ENCODE measurements at regions of chr11 and their contacts with region 1.

Region 1: DNA sequence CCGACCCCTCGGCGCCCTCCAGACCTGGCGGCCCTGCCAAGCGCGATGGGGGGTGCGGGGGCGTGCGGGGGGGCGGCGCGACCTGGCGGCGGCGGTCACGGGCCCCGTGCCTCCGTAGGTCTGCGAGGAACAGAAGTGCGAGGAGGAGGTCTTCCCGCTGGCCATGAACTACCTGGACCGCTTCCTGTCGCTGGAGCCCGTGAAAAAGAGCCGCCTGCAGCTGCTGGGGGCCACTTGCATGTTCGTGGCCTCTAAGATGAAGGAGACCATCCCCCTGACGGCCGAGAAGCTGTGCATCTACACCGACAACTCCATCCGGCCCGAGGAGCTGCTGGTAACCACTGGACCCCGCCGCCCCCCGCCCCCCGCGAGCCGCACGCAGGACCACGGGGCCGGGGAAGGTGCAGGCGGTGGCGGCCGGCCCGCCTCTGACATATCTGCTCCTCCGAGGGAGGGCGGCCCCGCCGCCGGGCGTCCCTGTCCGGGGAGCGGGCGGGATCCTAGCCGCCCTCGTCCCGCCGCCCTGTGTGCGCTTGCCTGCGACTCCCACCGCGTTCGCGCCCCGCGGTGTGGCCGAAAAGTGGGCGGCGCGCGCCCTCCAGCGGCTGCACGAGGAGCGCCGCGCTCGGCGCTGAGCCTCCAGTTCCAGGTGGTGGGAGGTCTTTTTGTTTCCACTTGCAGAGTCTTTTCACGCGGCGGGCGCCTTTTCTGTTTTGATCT is 2.1 kb downstream of the CCND1 start:
- DNase-seq: peak; percentile 62
- H3K4me3 Mint-ChIP-seq: peak overlapping the region; percentile 73
- H3K27ac Mint-ChIP-seq: no peak overlapping the region
- H3K4me1 Mint-ChIP-seq: no peaks in the 10 kb centered on the region
- H3K27me3 Mint-ChIP-seq: peaks cover 24% of the 10 kb centered on the region

Region 2: DNA sequence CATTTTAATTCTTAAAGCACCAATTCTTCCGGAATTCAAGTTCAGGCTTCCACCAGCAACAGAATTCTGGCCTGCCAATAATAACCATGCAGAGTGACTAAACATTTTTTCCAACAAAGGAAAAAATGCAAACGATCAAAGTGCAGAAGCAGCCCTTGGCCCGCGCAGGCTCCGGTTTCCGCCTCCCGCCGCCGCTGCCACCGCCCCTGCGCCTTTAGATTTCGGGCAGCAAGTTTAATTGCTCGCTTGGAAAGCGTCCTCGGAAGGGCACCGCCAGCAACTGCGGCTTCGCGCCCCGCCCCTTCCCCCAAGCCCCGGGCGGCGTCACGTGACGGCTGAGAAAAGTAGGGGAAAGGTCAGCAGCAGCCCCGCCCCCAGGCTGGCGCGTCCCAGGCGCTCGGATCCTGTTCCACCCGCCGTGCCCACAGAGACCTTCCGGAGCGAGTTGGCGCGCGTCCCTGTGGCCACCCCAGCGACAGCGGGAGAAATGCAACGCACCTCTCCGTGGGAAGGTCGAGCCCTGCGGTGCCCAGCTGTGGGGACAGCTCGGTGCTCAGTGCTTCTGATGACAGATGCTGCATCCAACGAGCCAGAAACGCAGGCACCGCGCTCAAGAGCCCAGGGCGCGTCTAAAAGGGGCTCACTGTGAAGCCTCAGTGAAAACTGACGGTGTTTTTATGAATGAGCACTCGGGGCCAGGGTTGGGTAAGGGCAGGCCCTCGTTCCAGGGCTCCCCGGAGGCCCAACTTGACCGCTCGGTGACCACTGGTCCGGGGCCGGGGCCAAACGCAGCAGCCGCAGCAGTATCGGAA is 803.8 kb before region 1 on chr11:
- intact Hi-C with region 1: loop called (anchors 2 kb)
- DNase-seq: peak; percentile 85
- H3K4me3 Mint-ChIP-seq: peak overlapping the region; percentile 70
- H3K27ac Mint-ChIP-seq: peak overlapping the region; percentile 73
- H3K4me1 Mint-ChIP-seq: peaks cover 50% of the 10 kb centered on the region
- H3K27me3 Mint-ChIP-seq: peaks cover 2% of the 10 kb centered on the region

Region 3: DNA sequence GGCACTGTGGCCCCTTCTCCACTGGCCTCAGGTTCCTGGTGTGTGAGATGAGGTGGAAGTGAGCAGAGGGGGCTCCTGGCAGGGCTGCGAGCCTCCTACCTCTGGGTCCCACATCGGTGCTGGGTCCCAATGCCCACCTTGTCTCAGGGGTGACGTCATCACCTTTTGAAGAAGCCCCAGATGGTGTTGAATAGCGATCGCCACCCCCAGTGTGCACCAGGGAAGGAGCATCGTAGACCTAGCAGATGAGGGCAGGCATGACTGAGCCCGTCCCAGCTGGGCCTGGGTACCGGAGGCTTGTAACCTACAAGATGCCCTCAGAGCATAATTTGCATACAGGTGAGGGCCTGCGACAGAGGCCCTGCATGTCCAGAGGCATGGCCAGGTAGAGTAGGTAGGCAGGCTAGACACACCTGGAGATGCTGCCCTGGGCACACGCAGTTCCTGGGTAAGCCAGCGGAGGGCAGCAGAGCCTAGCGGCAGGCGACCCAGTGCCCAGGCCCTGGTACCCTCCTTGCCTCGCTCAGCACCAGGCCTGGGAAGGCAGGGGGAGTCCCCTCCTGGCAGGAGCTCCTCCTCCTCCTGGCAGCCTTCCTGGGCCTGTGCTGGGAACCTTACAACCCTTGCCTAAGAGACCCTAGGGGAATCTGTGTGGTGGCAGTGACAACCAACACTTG is 541.8 kb before region 1 on chr11:
- intact Hi-C with region 1: loop called (anchors 1 kb)
- DNase-seq: peak; percentile 53
- H3K4me3 Mint-ChIP-seq: no peak overlapping the region
- H3K27ac Mint-ChIP-seq: no peak overlapping the region
- H3K4me1 Mint-ChIP-seq: no peaks in the 10 kb centered on the region
- H3K27me3 Mint-ChIP-seq: no peaks in the 10 kb centered on the region

Region 4: GRCh38 chr11:69122642-69123431 is 520.2 kb before region 1 on chr11:
- intact Hi-C with region 1: loop called (anchors 5 kb)
- DNase-seq: peak; percentile 40
- H3K4me3 Mint-ChIP-seq: peak overlapping the region; percentile 59
- H3K27ac Mint-ChIP-seq: peak overlapping the region; percentile 5
- H3K4me1 Mint-ChIP-seq: peaks cover 36% of the 10 kb centered on the region
- H3K27me3 Mint-ChIP-seq: peaks cover 2% of the 10 kb centered on the region

Region 5: DNA sequence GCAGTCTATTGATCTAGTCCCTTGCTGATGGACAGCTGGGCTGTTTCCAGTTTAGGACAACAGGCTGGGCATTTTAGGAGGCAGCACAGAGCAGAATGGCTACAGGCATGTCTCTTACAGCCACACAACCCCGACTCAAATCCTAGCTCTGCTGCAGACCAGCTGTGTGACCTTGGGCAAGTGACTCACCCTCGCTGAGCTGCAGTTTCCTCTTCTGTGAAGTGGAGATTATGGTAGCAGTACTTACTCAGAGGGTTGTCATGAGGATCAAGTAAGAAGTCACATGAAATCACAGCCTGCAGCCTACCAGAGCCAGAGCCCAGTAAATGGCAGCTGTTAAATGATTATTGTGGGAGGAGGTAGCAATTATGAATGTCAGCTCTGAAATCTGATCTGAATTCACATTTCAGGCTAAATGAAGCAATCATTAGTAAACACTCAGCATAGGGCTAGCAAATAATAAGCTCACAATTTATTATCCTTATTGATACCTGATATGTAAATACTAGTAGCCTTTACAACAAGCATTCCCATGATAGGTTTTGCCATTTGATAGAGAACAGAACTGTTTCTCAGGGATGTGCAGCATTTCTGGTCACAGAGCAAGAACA is 290.3 kb before region 1 on chr11:
- intact Hi-C with region 1: loop called (anchors 2 kb)
- DNase-seq: no peak
- H3K4me3 Mint-ChIP-seq: no peak overlapping the region
- H3K27ac Mint-ChIP-seq: peak overlapping the region; percentile 43
- H3K4me1 Mint-ChIP-seq: peaks cover 10% of the 10 kb centered on the region
- H3K27me3 Mint-ChIP-seq: peaks cover 1% of the 10 kb centered on the region

Region 6: GRCh38 chr11:69704508-69705253 is 61.6 kb after region 1 on chr11:
- intact Hi-C with region 1: loop called (anchors 2 kb)
- DNase-seq: no peak
- H3K4me3 Mint-ChIP-seq: no peak overlapping the region
- H3K27ac Mint-ChIP-seq: peak overlapping the region; percentile 40
- H3K4me1 Mint-ChIP-seq: no peaks in the 10 kb centered on the region
- H3K27me3 Mint-ChIP-seq: peaks cover 65% of the 10 kb centered on the region

Measured in activated T-helper 1 cell treated with anti-CD3 and anti-CD28 coated beads, Interleukin-12 subunit alpha, Interleukin-12 subunit beta, Interleukin-2, Interleukin-4 antibody, amounts not matched to agents 30 ng/mL and 10 ng/mL and 1 ng/mL, durations not matched to agents 14 hours and 24 hours and 36 hours (primary cell).